ENCODE measurements at regions of chr1 and their contacts with region 1.

Region 1: DNA sequence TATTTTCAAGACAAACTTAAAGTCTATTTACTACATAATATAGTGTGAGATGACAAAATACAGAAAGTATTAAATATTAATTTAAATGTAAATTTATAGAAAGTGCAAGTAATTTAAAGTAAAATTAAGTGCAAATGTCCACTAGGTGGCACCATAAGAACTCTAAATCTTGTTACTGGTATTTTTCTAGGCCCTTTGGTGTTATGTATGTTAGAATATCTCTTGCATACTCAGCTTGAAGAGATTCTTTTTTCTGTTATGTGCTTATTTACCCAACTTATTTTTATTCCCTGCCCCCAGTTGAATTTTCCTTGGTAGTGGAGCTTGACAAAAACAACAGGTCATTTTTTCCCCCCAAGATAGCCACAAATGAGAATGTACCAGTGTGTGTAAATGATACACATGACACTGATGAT is 71.5 kb downstream of the RPS6KC1 start:
- DNase-seq: peak; percentile 66
- H3K4me3 ChIP-seq: no peak overlapping the region
- H3K27ac ChIP-seq: no peak overlapping the region
- H3K4me1 ChIP-seq: peaks cover 39% of the 10 kb centered on the region
- H3K27me3 ChIP-seq: no peaks in the 10 kb centered on the region
- CTCF ChIP-seq: peak; percentile 18 to 21
- POLR2A ChIP-seq: no peak

Region 2: GRCh38 chr1:213035573-213035972 is 86.9 kb before region 1 on chr1:
- CTCF ChIA-PET with region 1: no interaction called
- POLR2A ChIA-PET with region 1: no interaction called
- dilution Hi-C with region 1: no loop called
- intact Hi-C with region 1: no loop called
- DNase-seq: no peak
- H3K4me3 ChIP-seq: no peak overlapping the region
- H3K27ac ChIP-seq: no peak overlapping the region
- H3K4me1 ChIP-seq: no peaks in the 10 kb centered on the region
- H3K27me3 ChIP-seq: peaks cover 4 to 6% of the 10 kb centered on the region in 2 experiments
- CTCF ChIP-seq: no peak
- POLR2A ChIP-seq: no peak

Region 3: DNA sequence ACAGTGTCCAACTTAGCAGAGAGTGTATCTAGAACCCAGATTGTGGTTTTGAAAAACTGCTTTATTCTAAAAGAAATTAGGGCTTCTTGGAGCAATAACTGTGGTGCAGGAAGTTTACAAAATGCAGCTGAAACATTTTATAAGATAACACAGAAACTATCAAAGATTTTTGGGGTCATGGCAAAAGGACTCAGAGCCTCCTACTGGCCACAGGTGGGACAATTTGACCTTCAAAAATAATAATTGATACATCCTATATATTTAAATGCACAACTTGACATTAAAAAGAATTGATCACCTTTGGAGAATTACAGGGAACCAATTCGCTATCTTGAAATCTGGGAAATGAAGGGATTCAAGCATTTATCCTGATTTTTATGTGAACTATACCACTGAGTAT is 163.7 kb after region 1 on chr1:
- CTCF ChIA-PET with region 1: interaction called, 5 read pairs
- POLR2A ChIA-PET with region 1: no interaction called
- dilution Hi-C with region 1: no loop called
- intact Hi-C with region 1: loop called (anchors 5 kb)
- DNase-seq: no peak
- H3K4me3 ChIP-seq: no peak overlapping the region
- H3K27ac ChIP-seq: no peak overlapping the region
- H3K4me1 ChIP-seq: no peaks in the 10 kb centered on the region
- H3K27me3 ChIP-seq: no peaks in the 10 kb centered on the region
- CTCF ChIP-seq: peak in 1 of 2 donors; percentile 25
- POLR2A ChIP-seq: no peak

Region 4: DNA sequence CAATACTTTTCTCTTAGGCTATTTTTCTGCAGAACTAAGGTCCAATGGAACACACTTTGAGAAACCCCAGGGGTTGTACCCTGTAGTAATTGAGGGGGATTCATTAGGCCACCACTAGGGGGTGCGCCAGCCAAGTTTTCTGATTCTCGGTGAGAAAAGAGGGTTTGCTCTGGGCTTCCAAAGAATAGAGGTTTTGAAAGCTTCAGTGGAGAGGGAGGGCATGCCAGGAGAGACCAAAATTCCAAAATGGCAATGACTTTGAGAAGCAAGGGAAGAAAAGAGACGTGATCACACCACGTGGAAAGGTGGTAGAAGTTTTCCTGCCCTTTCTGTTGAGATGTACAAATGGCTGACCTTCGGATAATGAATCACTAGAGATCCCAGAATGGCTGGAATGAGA is 251.8 kb after region 1 on chr1:
- CTCF ChIA-PET with region 1: interaction called, 5 read pairs
- POLR2A ChIA-PET with region 1: no interaction called
- dilution Hi-C with region 1: no loop called
- intact Hi-C with region 1: loop called (anchors 5 kb)
- DNase-seq: peak; percentile 61
- H3K4me3 ChIP-seq: no peak overlapping the region
- H3K27ac ChIP-seq: no peak overlapping the region
- H3K4me1 ChIP-seq: no peaks in the 10 kb centered on the region
- H3K27me3 ChIP-seq: no peaks in the 10 kb centered on the region
- CTCF ChIP-seq: peak; percentile 84 to 95
- POLR2A ChIP-seq: no peak

Region 5: DNA sequence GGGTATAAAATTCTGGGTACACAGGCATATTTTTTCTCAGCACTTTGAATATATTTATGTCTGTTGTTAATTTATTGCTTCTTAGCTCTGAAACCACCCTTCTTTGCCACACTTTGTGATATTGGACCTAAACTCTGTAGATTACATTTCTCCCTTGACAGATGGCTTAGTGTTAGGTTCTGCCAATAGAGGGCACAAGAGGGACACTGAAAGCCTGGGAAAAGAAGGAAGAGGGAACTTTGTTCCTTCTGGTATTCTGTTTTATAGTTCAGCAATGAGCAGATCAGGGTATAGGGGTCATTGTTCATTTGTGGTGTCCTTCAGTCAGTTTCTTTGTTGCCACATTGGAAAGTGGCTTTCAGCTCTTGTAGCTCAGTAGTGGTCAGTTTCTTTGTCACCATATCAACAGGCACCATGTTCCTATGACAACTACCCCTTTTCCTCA is 441.7 kb after region 1 on chr1:
- CTCF ChIA-PET with region 1: no interaction called
- POLR2A ChIA-PET with region 1: no interaction called
- dilution Hi-C with region 1: no loop called
- intact Hi-C with region 1: loop called (anchors 5 kb)
- DNase-seq: peak; percentile 51
- H3K4me3 ChIP-seq: no peak overlapping the region
- H3K27ac ChIP-seq: no peak overlapping the region
- H3K4me1 ChIP-seq: no peaks in the 10 kb centered on the region
- H3K27me3 ChIP-seq: no peaks in the 10 kb centered on the region
- CTCF ChIP-seq: peak; percentile 40 to 52
- POLR2A ChIP-seq: no peak

Region 6: GRCh38 chr1:214102907-214103306 is 980.4 kb after region 1 on chr1:
- CTCF ChIA-PET with region 1: no interaction called
- POLR2A ChIA-PET with region 1: no interaction called
- dilution Hi-C with region 1: no loop called
- intact Hi-C with region 1: loop called (anchors 5 kb)
- DNase-seq: peak; percentile 91
- H3K4me3 ChIP-seq: no peak overlapping the region
- H3K27ac ChIP-seq: peak overlapping the region; percentile 76
- H3K4me1 ChIP-seq: peaks cover 25% of the 10 kb centered on the region
- H3K27me3 ChIP-seq: no peaks in the 10 kb centered on the region
- CTCF ChIP-seq: no peak
- POLR2A ChIP-seq: no peak